ENCODE measurements at regions of chr18 and their contacts with region 1.

Region 1: GRCh38 chr18:35143622-35144596 is 96.9 kb upstream of the ZNF397 start:
- DNase-seq: peak; percentile 33 to 48
- H3K4me3 ChIP-seq: no peak overlapping the region
- H3K4me3 Mint-ChIP-seq: no peak overlapping the region
- H3K27ac Mint-ChIP-seq: no peak overlapping the region
- H3K4me1 ChIP-seq: no peaks in the 10 kb centered on the region
- H3K4me1 Mint-ChIP-seq: no peaks in the 10 kb centered on the region
- H3K27me3 ChIP-seq: no peaks in the 10 kb centered on the region
- H3K27me3 Mint-ChIP-seq: no peaks in the 10 kb centered on the region
- CTCF ChIP-seq: peak in 1 of 2 experiments; percentile 63

Region 2: GRCh38 chr18:34867520-34867919 is 276.4 kb before region 1 on chr18:
- CTCF ChIA-PET with region 1: interaction called, 3 read pairs
- POLR2A ChIA-PET with region 1: no interaction called
- intact Hi-C with region 1: loop called (anchors 5 kb)
- DNase-seq: peak in 1 of 2 experiments; percentile 8
- H3K4me3 ChIP-seq: no peak overlapping the region
- H3K4me3 Mint-ChIP-seq: no peak overlapping the region
- H3K27ac Mint-ChIP-seq: no peak overlapping the region
- H3K4me1 ChIP-seq: no peaks in the 10 kb centered on the region
- H3K4me1 Mint-ChIP-seq: no peaks in the 10 kb centered on the region
- H3K27me3 ChIP-seq: no peaks in the 10 kb centered on the region
- H3K27me3 Mint-ChIP-seq: no peaks in the 10 kb centered on the region
- CTCF ChIP-seq: peak in 1 of 2 experiments; percentile 16

Region 3: DNA sequence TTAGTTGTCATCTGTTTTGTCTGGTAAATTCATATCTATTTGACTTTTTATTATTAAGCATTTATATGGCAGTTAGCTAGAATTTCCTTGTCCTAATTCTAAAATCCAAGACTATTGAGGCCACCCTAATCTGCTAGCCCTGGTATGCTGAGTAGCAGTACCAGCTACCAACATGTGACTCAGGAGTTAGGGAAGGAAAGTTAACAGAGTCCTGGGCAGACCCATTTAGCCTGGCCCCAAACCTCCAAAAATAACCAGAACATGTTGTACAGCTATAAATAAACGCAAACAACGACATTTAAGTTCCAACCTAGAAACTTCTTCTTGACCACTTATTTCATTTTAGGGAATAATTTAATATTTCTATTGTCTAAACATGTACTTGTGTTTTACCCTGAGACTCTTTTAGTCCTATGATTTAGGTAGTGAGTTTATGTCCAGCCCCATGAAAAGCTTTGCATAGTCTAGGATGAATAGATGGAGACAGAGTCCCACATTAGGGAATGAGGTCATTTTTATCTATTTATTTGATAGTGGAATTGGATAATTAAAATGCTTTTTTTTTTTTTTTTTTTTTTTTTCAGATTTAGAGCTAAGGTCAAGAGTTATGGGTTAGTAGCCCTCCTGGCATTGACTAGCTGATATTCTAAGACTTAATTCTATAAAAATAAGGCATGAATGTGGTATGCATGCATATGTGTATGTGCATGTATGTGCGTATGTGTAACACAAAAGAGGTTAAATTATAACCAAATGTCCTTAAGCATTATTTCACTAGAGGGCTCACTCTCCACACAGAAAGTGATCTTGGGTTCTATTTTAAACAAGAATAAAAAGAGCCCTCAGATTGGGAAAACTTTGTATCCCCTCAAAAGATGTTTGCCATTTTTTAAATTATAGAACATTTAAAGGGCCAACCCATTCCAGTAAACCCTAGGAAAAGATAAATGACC is 262.8 kb before region 1 on chr18:
- CTCF ChIA-PET with region 1: interaction called, 3 read pairs
- POLR2A ChIA-PET with region 1: no interaction called
- intact Hi-C with region 1: loop called (anchors 2 kb)
- DNase-seq: no peak
- H3K4me3 ChIP-seq: no peak overlapping the region
- H3K4me3 Mint-ChIP-seq: no peak overlapping the region
- H3K27ac Mint-ChIP-seq: no peak overlapping the region
- H3K4me1 ChIP-seq: no peaks in the 10 kb centered on the region
- H3K4me1 Mint-ChIP-seq: no peaks in the 10 kb centered on the region
- H3K27me3 ChIP-seq: no peaks in the 10 kb centered on the region
- H3K27me3 Mint-ChIP-seq: no peaks in the 10 kb centered on the region
- CTCF ChIP-seq: peak in 1 of 2 experiments; percentile 18

Region 4: GRCh38 chr18:34947711-34948125 is 196.2 kb before region 1 on chr18:
- CTCF ChIA-PET with region 1: no interaction called
- POLR2A ChIA-PET with region 1: no interaction called
- intact Hi-C with region 1: loop called (anchors 10 kb)
- DNase-seq: no peak
- H3K4me3 ChIP-seq: no peak overlapping the region
- H3K4me3 Mint-ChIP-seq: no peak overlapping the region
- H3K27ac Mint-ChIP-seq: no peak overlapping the region
- H3K4me1 ChIP-seq: peaks cover 8% of the 10 kb centered on the region
- H3K4me1 Mint-ChIP-seq: peaks cover 5% of the 10 kb centered on the region
- H3K27me3 ChIP-seq: no peaks in the 10 kb centered on the region
- H3K27me3 Mint-ChIP-seq: no peaks in the 10 kb centered on the region
- CTCF ChIP-seq: no peak

Region 5: GRCh38 chr18:35005963-35006577 is 137.8 kb before region 1 on chr18:
- CTCF ChIA-PET with region 1: interaction called, 10 read pairs
- POLR2A ChIA-PET with region 1: no interaction called
- intact Hi-C with region 1: loop called (anchors 1 kb)
- DNase-seq: peak in 1 of 2 experiments; percentile 40
- H3K4me3 ChIP-seq: no peak overlapping the region
- H3K4me3 Mint-ChIP-seq: no peak overlapping the region
- H3K27ac Mint-ChIP-seq: no peak overlapping the region
- H3K4me1 ChIP-seq: no peaks in the 10 kb centered on the region
- H3K4me1 Mint-ChIP-seq: no peaks in the 10 kb centered on the region
- H3K27me3 ChIP-seq: no peaks in the 10 kb centered on the region
- H3K27me3 Mint-ChIP-seq: no peaks in the 10 kb centered on the region
- CTCF ChIP-seq: peak; percentile 26 to 34

Measured in Caco-2 (cell line).